Activated naive CD4-positive, alpha-beta T cell treated with anti-CD3 and anti-CD28 coated beads, Interleukin-2, amount 10 ng/mL, durations not matched to agents 7 days and 5 days (primary cell): ENCODE measurements at regions of chr12 and their contacts with region 1.

Region 1: GRCh38 chr12:15899282-15899870 is 11.8 kb upstream of the DERA start:
- DNase-seq: no peak
- H3K4me3 Mint-ChIP-seq: no peak overlapping the region
- H3K27ac Mint-ChIP-seq: no peak overlapping the region
- H3K4me1 Mint-ChIP-seq: peaks cover 8% of the 10 kb centered on the region
- H3K27me3 Mint-ChIP-seq: no peaks in the 10 kb centered on the region

Region 2: GRCh38 chr12:15621140-15621539 is 278.2 kb before region 1 on chr12:
- CTCF ChIA-PET with region 1: no interaction called
- DNase-seq: no peak
- H3K4me3 Mint-ChIP-seq: no peak overlapping the region
- H3K27ac Mint-ChIP-seq: no peak overlapping the region
- H3K4me1 Mint-ChIP-seq: no peaks in the 10 kb centered on the region
- H3K27me3 Mint-ChIP-seq: peaks cover 3% of the 10 kb centered on the region

Region 3: DNA sequence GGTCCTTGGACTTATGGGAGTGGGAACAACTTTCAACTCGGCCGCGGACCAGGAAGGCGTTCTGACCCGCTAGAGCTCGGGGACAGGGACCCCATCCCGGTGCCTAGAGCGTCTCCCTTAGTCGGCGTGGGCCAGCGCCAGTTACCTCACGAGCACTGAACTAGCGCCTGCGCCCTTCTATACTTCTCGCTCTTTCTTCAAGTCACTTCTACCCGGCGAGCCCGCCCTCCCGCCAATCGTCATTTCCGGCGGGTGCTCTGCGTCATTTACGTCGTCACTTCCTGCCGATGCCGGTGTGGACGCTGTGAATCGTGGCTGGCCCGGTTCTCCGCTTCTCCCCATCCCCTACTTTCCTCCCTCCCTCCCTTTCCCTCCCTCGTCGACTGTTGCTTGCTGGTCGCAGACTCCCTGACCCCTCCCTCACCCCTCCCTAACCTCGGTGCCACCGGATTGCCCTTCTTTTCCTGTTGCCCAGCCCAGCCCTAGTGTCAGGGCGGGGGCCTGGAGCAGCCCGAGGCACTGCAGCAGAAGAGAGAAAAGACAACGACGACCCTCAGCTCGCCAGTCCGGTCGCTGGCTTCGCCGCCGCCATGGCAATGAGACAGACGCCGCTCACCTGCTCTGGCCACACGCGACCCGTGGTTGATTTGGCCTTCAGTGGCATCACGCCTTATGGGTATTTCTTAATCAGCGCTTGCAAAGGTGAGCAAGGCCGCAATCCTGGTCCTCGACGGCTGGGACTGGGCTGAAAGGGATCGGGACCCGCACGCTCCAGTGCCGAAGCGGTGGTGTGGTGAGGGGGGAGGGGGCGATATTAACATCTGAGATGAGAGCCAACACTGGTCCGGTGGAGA is 17.0 kb before region 1 on chr12 and contains the start of gene STRAP:
- CTCF ChIA-PET with region 1: interaction called, 18 read pairs
- DNase-seq: peak; percentile 97
- H3K4me3 Mint-ChIP-seq: peak within 1 kb of the TSS; percentile 98
- H3K27ac Mint-ChIP-seq: peak within 1 kb of the TSS; percentile 99
- H3K4me1 Mint-ChIP-seq: peaks cover 54% of the 10 kb centered on the region
- H3K27me3 Mint-ChIP-seq: peaks cover 4% of the 10 kb centered on the region

Region 4: GRCh38 chr12:15910864-15911721 is 11.7 kb after region 1 on chr12 and contains the start of gene DERA:
- CTCF ChIA-PET with region 1: interaction called, 21 read pairs
- DNase-seq: peak; percentile 71
- H3K4me3 Mint-ChIP-seq: peak within 1 kb of the TSS; percentile 92
- H3K27ac Mint-ChIP-seq: peak within 1 kb of the TSS; percentile 91
- H3K4me1 Mint-ChIP-seq: peaks cover 23% of the 10 kb centered on the region
- H3K27me3 Mint-ChIP-seq: no peaks in the 10 kb centered on the region